Activated CD4-positive, alpha-beta memory T cell treated with anti-CD3 and anti-CD28 coated beads for 36 hours (primary cell): ENCODE measurements at regions of chr5 and their contacts with region 1.

Region 1: GRCh38 chr5:180718810-180719453 is 20.9 kb downstream of the OR2Y1 start:
- DNase-seq: peak; percentile 30
- H3K4me3 Mint-ChIP-seq: no peak overlapping the region
- H3K27ac Mint-ChIP-seq: no peak overlapping the region
- H3K4me1 Mint-ChIP-seq: peaks cover 10% of the 10 kb centered on the region
- H3K27me3 Mint-ChIP-seq: peaks cover 9% of the 10 kb centered on the region

Region 2: GRCh38 chr5:180670586-180671359 is 48.2 kb before region 1 on chr5:
- CTCF ChIA-PET with region 1: interaction called, 4 read pairs
- POLR2A ChIA-PET with region 1: no interaction called
- intact Hi-C with region 1: loop called (anchors 1 kb)
- DNase-seq: peak; percentile 69
- H3K4me3 Mint-ChIP-seq: peak overlapping the region; percentile 13
- H3K27ac Mint-ChIP-seq: no peak overlapping the region
- H3K4me1 Mint-ChIP-seq: peaks cover 12% of the 10 kb centered on the region
- H3K27me3 Mint-ChIP-seq: peaks cover 10% of the 10 kb centered on the region

Region 3: GRCh38 chr5:180689071-180689694 is 29.7 kb before region 1 on chr5:
- CTCF ChIA-PET with region 1: interaction called, 7 read pairs
- POLR2A ChIA-PET with region 1: no interaction called
- intact Hi-C with region 1: loop called (anchors 1 kb)
- DNase-seq: peak; percentile 58
- H3K4me3 Mint-ChIP-seq: peak overlapping the region; percentile 30
- H3K27ac Mint-ChIP-seq: peak overlapping the region; percentile 61
- H3K4me1 Mint-ChIP-seq: peaks cover 33% of the 10 kb centered on the region
- H3K27me3 Mint-ChIP-seq: peaks cover 9% of the 10 kb centered on the region

Region 4: GRCh38 chr5:180769821-180770220 is 50.9 kb after region 1 on chr5:
- CTCF ChIA-PET with region 1: no interaction called
- POLR2A ChIA-PET with region 1: no interaction called
- intact Hi-C with region 1: loop called (anchors 10 kb)
- DNase-seq: no peak
- H3K4me3 Mint-ChIP-seq: no peak overlapping the region
- H3K27ac Mint-ChIP-seq: no peak overlapping the region
- H3K4me1 Mint-ChIP-seq: no peaks in the 10 kb centered on the region
- H3K27me3 Mint-ChIP-seq: peaks cover 14% of the 10 kb centered on the region